Breast epithelium (tissue), 4 donors: ENCODE measurements at regions of chr6 and their contacts with region 1.

Region 1: DNA sequence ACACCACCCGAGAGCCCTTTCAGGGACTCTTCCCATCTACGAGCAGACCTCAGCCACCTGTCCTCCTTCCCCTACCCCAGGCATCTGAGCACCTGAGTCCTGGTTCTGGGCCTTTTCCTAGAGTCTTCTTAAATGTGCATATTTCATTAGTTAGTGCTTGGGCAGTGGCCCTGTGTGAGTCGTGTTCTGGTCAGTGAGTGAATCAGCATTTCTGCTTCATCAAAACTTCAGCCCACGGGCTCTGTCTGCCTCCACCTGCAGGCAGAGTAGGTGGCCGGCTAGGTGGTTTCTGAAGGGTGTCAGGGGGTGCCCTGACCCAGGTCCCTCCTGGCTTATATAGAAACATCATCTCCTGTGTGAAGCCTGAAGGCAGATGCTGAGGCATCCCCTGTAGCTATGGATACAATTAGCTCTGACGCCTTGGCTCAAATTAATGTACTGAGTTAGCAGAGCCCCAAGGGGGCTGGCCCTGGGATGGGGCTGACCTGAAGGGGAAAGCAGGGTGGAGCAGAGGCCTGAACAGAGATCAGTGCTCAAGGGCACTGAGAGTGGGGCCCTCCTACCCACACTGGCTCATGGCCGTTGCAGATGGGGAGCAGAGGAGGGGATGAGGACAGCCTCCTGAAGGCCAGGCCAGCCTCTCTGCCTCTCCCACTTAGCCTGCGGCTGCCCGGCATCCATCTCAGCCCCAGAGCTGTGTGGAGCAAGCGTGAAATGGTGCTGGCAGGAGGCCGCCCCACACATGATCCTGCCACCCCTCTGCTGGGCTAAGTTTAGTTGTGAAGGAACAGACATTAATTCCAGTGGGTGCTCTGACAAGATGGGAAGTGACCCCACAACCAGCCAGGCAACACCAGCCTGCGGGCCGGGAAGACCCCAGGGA is 13.6 kb downstream of the IP6K3 start:
- DNase-seq: no peak
- H3K4me3 ChIP-seq: no peak overlapping the region
- H3K27ac ChIP-seq: peak overlapping the region; percentile 80 to 84
- H3K4me1 ChIP-seq: peaks cover 0 to 14% of the 10 kb centered on the region in 2 donors
- H3K27me3 ChIP-seq: no peaks in the 10 kb centered on the region
- CTCF ChIP-seq: no peak
- POLR2A ChIP-seq: no peak

Region 2: DNA sequence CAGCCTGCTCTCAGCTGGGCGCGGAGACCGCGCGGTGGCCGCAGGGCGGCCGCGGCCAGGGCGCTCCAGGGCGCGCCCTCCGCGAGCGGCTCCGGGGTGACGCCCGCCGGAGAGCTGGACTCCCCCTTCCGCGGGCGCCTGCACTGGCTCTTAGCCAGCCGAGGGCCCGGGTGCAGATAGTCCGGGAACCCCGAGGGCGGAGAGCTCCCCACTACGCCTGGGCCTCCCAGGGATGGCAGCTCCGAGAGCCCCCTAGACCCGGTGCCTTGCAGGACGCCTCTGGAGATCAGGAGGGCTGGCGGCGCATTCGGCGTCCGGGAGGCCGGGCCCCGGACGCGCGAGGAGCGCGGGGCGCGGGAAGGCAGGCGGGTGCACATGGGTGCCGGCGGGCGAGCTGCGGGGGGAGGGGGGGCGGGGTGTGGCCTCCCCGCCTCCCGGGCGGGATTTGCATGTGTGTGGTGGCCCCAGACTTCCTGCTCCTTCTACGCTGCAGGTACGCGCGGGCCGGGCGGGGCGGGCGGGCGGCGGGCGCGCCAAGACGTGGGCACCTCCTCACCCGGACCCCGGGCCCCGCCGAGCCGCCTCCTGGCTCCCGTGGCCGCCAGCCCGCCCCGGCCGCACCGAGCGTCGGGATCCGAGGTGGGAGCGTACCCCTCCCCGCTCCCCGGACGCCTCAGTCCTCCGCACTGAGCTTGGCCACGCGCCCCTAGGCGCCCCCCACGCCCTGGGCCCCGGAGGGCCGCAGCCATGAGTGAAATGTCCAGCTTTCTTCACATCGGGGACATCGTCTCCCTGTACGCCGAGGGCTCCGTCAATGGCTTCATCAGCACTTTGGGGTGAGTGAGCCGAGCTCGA is 112.0 kb before region 1 on chr6 and contains the start of gene ITPR3:
- intact Hi-C with region 1: no loop called
- DNase-seq: no peak
- H3K4me3 ChIP-seq: peak within 1 kb of the TSS; percentile 67 to 86 (median 73)
- H3K27ac ChIP-seq: peak within 1 kb of the TSS; percentile 90 to 91
- H3K4me1 ChIP-seq: no peaks in the 10 kb centered on the region
- H3K27me3 ChIP-seq: no peaks in the 10 kb centered on the region
- CTCF ChIP-seq: no peak
- POLR2A ChIP-seq: no peak
- total RNA-seq, gene ITPR3: 18.4 to 40.0 (median 27.7) TPM

Region 3: GRCh38 chr6:33700391-33701050 is 32.5 kb before region 1 on chr6:
- intact Hi-C with region 1: no loop called
- DNase-seq: no peak
- H3K4me3 ChIP-seq: no peak overlapping the region
- H3K27ac ChIP-seq: peak overlapping the region; percentile 66 to 68
- H3K4me1 ChIP-seq: peaks cover 9 to 31% of the 10 kb centered on the region in 2 donors
- H3K27me3 ChIP-seq: no peaks in the 10 kb centered on the region
- CTCF ChIP-seq: peak in 2 of 3 donors; percentile 40 to 55
- POLR2A ChIP-seq: no peak

Region 4: GRCh38 chr6:34218448-34219090 is 485.5 kb after region 1 on chr6:
- intact Hi-C with region 1: loop called (anchors 5 kb)
- DNase-seq: no peak
- H3K4me3 ChIP-seq: no peak overlapping the region
- H3K27ac ChIP-seq: no peak overlapping the region
- H3K4me1 ChIP-seq: no peaks in the 10 kb centered on the region
- H3K27me3 ChIP-seq: no peaks in the 10 kb centered on the region
- CTCF ChIP-seq: no peak
- POLR2A ChIP-seq: no peak